Activated CD4-positive, alpha-beta memory T cell treated with anti-CD3 and anti-CD28 coated beads for 36 hours (primary cell): ENCODE measurements at regions of chr3 and their contacts with region 1.

Region 1: GRCh38 chr3:183285828-183286457 is 32.9 kb downstream of the B3GNT5 start:
- DNase-seq: peak; percentile 97
- H3K4me3 Mint-ChIP-seq: peak overlapping the region; percentile 71
- H3K27ac Mint-ChIP-seq: peak overlapping the region; percentile 98
- H3K4me1 Mint-ChIP-seq: peaks cover 39% of the 10 kb centered on the region
- H3K27me3 Mint-ChIP-seq: no peaks in the 10 kb centered on the region

Region 2: GRCh38 chr3:183099026-183099837 is 186.7 kb before region 1 on chr3 and contains the start of gene MCCC1:
- CTCF ChIA-PET with region 1: no interaction called
- POLR2A ChIA-PET with region 1: no interaction called
- intact Hi-C with region 1: loop called (anchors 1 kb)
- DNase-seq: peak; percentile 99
- H3K4me3 Mint-ChIP-seq: peak within 1 kb of the TSS; percentile 95
- H3K27ac Mint-ChIP-seq: peak within 1 kb of the TSS; percentile 96
- H3K4me1 Mint-ChIP-seq: peaks cover 34% of the 10 kb centered on the region
- H3K27me3 Mint-ChIP-seq: no peaks in the 10 kb centered on the region
- total RNA-seq, gene MCCC1: 28.4 to 29.7 TPM

Region 3: DNA sequence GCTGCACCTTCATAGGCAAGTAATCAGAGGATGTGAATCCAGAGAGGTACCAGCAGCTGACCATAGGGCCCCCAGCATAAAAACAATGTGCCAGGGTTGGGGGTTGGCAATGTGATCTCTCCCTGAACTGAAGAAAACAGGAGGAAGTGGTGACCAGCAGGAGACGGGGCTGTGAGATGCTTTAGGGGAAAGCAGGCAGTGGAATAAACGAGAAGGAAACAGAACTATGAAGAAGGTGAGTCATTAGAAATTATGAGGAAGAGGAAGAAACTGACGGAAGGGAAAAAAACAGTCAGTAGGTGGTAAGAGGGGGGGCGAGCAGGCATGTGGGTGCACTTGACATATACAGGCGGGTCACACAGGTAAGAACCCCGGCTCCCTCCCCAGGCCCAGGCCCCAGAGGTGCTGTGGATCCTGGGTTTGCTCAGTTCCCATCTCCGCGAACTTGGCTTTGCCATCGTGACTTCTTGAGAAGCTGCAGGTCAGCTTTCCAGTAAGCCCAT is 75.1 kb before region 1 on chr3:
- CTCF ChIA-PET with region 1: interaction called, 3 read pairs
- POLR2A ChIA-PET with region 1: interaction called, 6 read pairs
- intact Hi-C with region 1: loop called (anchors 2 kb)
- DNase-seq: peak; percentile 56
- H3K4me3 Mint-ChIP-seq: no peak overlapping the region
- H3K27ac Mint-ChIP-seq: peak overlapping the region; percentile 67
- H3K4me1 Mint-ChIP-seq: peaks cover 46% of the 10 kb centered on the region
- H3K27me3 Mint-ChIP-seq: no peaks in the 10 kb centered on the region

Region 4: GRCh38 chr3:183265834-183266417 is 20.0 kb before region 1 on chr3:
- CTCF ChIA-PET with region 1: interaction called, 5 read pairs
- POLR2A ChIA-PET with region 1: interaction called, 29 read pairs
- intact Hi-C with region 1: loop called (anchors 1 kb)
- DNase-seq: peak; percentile 71
- H3K4me3 Mint-ChIP-seq: peak overlapping the region; percentile 25
- H3K27ac Mint-ChIP-seq: no peak overlapping the region
- H3K4me1 Mint-ChIP-seq: peaks cover 1% of the 10 kb centered on the region
- H3K27me3 Mint-ChIP-seq: no peaks in the 10 kb centered on the region

Region 5: GRCh38 chr3:183385698-183386613 is 100.0 kb after region 1 on chr3:
- CTCF ChIA-PET with region 1: interaction called, 16 read pairs
- POLR2A ChIA-PET with region 1: no interaction called
- intact Hi-C with region 1: no loop called
- DNase-seq: peak; percentile 61
- H3K4me3 Mint-ChIP-seq: no peak overlapping the region
- H3K27ac Mint-ChIP-seq: no peak overlapping the region
- H3K4me1 Mint-ChIP-seq: peaks cover 6% of the 10 kb centered on the region
- H3K27me3 Mint-ChIP-seq: no peaks in the 10 kb centered on the region

Region 6: GRCh38 chr3:183555541-183556081 is 269.7 kb after region 1 on chr3 and contains the start of gene KLHL6:
- CTCF ChIA-PET with region 1: no interaction called
- POLR2A ChIA-PET with region 1: no interaction called
- intact Hi-C with region 1: loop called (anchors 2 kb)
- DNase-seq: peak; percentile 90
- H3K4me3 Mint-ChIP-seq: peak within 1 kb of the TSS; percentile 100
- H3K27ac Mint-ChIP-seq: peak within 1 kb of the TSS; percentile 99
- H3K4me1 Mint-ChIP-seq: peaks cover 52% of the 10 kb centered on the region
- H3K27me3 Mint-ChIP-seq: no peaks in the 10 kb centered on the region
- total RNA-seq, gene KLHL6: 63.5 to 65.2 TPM